CD8-positive, alpha-beta T cell (primary cell): ENCODE measurements at regions of chr9 and their contacts with region 1.

Region 1: DNA sequence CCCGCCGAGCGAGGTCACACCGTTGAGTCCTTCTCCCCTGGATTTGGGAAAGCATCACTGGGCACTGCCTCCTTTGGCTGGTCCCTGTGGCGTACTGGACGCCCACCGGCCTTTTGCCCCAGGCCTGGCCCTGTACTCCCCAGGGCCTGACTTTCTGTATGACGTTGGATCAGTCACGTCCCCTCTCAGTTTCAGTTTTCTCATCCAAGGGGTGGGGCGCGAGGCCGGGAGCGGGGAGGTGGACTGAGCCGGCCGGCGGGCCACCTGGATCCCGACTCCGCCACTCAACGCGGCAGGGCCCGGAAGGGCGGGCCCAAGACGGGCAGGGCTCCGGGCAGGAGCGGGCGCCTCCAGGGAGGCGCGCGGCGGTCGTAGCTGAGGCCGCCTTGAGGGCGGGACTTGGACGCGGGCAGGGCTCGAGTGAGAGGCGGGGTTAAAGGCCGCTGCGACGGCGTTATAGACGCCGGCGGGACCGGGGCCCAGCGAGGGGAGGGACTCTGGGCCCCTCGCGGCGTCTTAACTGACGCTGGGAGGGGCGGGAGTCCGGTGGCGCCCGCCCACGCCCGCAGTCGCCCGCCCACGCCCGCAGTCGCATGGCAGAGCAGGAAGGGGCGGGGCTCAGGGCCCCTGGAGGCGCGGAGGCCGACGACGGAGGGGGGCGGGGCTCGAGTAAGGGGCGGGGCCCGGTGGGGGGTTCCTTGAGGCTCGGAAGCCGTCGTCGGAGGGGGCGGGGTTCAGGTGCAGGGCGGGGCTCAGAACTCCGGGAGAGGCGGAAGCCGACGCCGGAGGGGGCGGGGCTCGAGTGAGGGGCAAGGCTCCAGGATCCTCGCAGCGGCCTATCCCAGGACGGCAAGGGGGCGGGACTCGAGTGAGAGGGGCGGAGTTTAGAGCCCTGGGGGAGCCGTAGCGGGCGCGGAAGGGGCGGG is 549 bp upstream of the CARD19 start:
- DNase-seq: peak; percentile 100
- ATAC-seq: peak; percentile 83
- H3K4me3 ChIP-seq: peak overlapping the region; percentile 70 to 89
- H3K4me3 Mint-ChIP-seq: peak overlapping the region; percentile 85
- H3K27ac ChIP-seq: peak overlapping the region; percentile 90 to 98
- H3K27ac Mint-ChIP-seq: peak overlapping the region; percentile 97
- H3K4me1 ChIP-seq: peaks cover 65% of the 10 kb centered on the region
- H3K4me1 Mint-ChIP-seq: peaks cover 71% of the 10 kb centered on the region
- H3K27me3 ChIP-seq: no peaks in the 10 kb centered on the region
- H3K27me3 Mint-ChIP-seq: no peaks in the 10 kb centered on the region
- CTCF ChIP-seq: no peak

Region 2: DNA sequence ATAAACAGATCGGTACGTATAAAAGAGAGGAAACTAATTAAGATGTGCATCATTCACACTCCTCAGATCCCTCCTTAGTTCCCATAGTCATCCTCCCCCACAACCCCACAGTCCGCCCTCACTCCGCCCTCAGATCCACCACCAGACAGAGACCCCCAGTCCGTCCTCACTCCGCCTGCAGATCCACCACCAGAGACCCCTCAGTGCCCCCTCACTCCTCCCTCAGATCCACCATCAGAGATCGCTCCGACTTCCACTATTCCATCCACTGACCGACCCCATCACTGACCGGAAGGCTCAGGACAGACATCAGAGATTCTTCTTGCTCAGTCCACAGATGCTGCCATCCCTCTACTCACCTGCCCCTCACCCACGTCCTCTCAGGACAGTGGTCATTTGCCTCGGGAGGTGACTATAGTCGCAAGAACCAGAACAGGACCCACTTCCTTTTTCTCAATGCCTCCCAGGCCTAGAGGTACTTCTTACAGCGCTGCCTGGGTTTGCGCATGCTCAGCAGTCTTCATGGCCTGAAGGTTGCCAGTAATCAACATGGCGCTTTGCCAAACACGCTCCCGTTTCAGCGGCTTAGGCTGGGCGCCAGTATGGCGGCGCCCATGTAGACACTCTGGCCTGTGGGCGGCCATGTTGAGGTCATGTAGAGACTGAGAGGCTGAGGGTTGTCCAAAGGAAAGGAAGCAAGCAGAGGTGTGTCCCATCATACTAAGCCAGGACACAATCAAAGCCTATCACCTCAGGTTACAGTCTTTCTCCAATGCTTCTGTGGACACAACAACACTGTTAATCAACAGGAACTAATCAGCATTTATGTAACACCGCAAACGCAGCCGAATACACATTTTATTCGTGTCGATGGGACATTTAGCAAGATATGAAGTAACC is 217.7 kb before region 1 on chr9 and contains the start of gene ZNF484:
- CTCF ChIA-PET with region 1: no interaction called
- POLR2A ChIA-PET with region 1: no interaction called
- intact Hi-C with region 1: loop called (anchors 1 to 5 kb)
- DNase-seq: peak; percentile 91 to 100 (median 98)
- ATAC-seq: peak; percentile 96
- H3K4me3 ChIP-seq: peak within 1 kb of the TSS; percentile 76 to 85
- H3K4me3 Mint-ChIP-seq: peak within 1 kb of the TSS; percentile 100
- H3K27ac ChIP-seq: peak within 1 kb of the TSS; percentile 81 to 90
- H3K27ac Mint-ChIP-seq: peak within 1 kb of the TSS; percentile 100
- H3K4me1 ChIP-seq: peaks cover 19% of the 10 kb centered on the region
- H3K4me1 Mint-ChIP-seq: peaks cover 48% of the 10 kb centered on the region
- H3K27me3 ChIP-seq: no peaks in the 10 kb centered on the region
- H3K27me3 Mint-ChIP-seq: no peaks in the 10 kb centered on the region
- CTCF ChIP-seq: no peak
- total RNA-seq, gene ZNF484: 18.4 to 18.7 TPM

Region 3: GRCh38 chr9:93058355-93059096 is 36.9 kb before region 1 on chr9 and contains the start of gene SUSD3:
- CTCF ChIA-PET with region 1: no interaction called
- POLR2A ChIA-PET with region 1: interaction called, 19 read pairs
- intact Hi-C with region 1: loop called in 1 of 2 experiments (anchors 1 kb)
- DNase-seq: peak in 8 of 9 experiments; percentile 52 to 84 (median 69)
- ATAC-seq: peak; percentile 63
- H3K4me3 ChIP-seq: peak within 1 kb of the TSS; percentile 60 to 91
- H3K4me3 Mint-ChIP-seq: peak within 1 kb of the TSS; percentile 91
- H3K27ac ChIP-seq: peak within 1 kb of the TSS; percentile 63 to 83
- H3K27ac Mint-ChIP-seq: peak within 1 kb of the TSS; percentile 100
- H3K4me1 ChIP-seq: peaks cover 81% of the 10 kb centered on the region
- H3K4me1 Mint-ChIP-seq: peaks cover 80% of the 10 kb centered on the region
- H3K27me3 ChIP-seq: no peaks in the 10 kb centered on the region
- H3K27me3 Mint-ChIP-seq: no peaks in the 10 kb centered on the region
- CTCF ChIP-seq: no peak
- total RNA-seq, gene SUSD3: 20.6 to 22.7 TPM

Region 4: GRCh38 chr9:93134015-93134739 is 38.7 kb after region 1 on chr9 and contains the start of gene NINJ1:
- CTCF ChIA-PET with region 1: no interaction called
- POLR2A ChIA-PET with region 1: interaction called, 5 read pairs
- intact Hi-C with region 1: loop called (anchors 1 kb)
- DNase-seq: peak; percentile 59 to 97 (median 79)
- ATAC-seq: peak; percentile 83
- H3K4me3 ChIP-seq: peak within 1 kb of the TSS; percentile 84 to 89
- H3K4me3 Mint-ChIP-seq: peak within 1 kb of the TSS; percentile 92
- H3K27ac ChIP-seq: peak within 1 kb of the TSS; percentile 85 to 92
- H3K27ac Mint-ChIP-seq: peak within 1 kb of the TSS; percentile 96
- H3K4me1 ChIP-seq: peaks cover 50% of the 10 kb centered on the region
- H3K4me1 Mint-ChIP-seq: peaks cover 56% of the 10 kb centered on the region
- H3K27me3 ChIP-seq: no peaks in the 10 kb centered on the region
- H3K27me3 Mint-ChIP-seq: no peaks in the 10 kb centered on the region
- CTCF ChIP-seq: no peak
- total RNA-seq, gene NINJ1: 214 to 229 TPM

Region 5: DNA sequence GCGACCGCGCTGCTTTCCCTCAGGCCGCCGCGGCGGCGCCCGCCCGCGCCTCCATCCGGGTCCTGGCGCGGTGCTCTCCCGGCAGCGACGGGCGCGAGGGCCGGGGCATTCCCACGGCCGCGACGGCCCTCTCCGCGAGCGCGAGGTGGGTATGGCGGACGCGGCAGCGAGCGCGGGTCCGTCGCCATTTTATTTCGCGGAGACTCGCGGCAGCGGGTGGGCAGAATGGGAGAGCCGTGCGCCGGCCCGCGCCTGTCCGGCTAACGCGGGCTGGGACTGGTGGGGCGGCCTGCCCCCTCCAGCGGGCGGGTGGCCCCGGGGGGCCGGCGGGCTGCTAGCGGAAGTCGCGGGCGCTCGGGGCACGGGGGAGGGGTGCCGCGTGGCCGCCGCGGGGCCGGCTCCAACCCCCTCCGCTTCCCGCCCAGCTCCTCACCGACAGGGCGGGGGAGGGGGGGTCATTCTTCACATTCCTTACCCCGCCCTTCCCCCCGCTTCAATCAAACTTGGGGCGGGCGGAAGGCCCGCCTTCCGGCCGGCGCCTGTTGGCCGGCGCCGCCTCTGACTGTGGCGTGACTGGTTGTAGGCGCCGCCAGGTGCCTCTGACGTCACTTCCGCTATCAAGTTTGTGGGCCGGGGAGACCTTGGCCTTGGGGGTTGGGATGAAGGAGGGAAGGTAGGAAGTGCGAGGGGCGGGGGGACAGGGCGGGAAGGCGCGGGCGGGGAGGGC is 1070.9 kb after region 1 on chr9:
- CTCF ChIA-PET with region 1: no interaction called
- POLR2A ChIA-PET with region 1: no interaction called
- intact Hi-C with region 1: loop called (anchors 5 to 10 kb)
- DNase-seq: peak; percentile 88 to 98 (median 93)
- ATAC-seq: peak; percentile 60
- H3K4me3 ChIP-seq: peak overlapping the region; percentile 52 to 89
- H3K4me3 Mint-ChIP-seq: peak overlapping the region; percentile 90
- H3K27ac ChIP-seq: peak overlapping the region; percentile 89 to 92
- H3K27ac Mint-ChIP-seq: peak overlapping the region; percentile 93
- H3K4me1 ChIP-seq: peaks cover 51% of the 10 kb centered on the region
- H3K4me1 Mint-ChIP-seq: peaks cover 55% of the 10 kb centered on the region
- H3K27me3 ChIP-seq: no peaks in the 10 kb centered on the region
- H3K27me3 Mint-ChIP-seq: no peaks in the 10 kb centered on the region
- CTCF ChIP-seq: no peak

Region 6: GRCh38 chr9:94250456-94250855 is 1155.0 kb after region 1 on chr9:
- CTCF ChIA-PET with region 1: no interaction called
- POLR2A ChIA-PET with region 1: no interaction called
- intact Hi-C with region 1: no loop called
- DNase-seq: peak in 7 of 9 experiments; percentile 9 to 58 (median 24)
- ATAC-seq: peak; percentile 68
- H3K4me3 ChIP-seq: no peak overlapping the region
- H3K4me3 Mint-ChIP-seq: no peak overlapping the region
- H3K27ac ChIP-seq: peak overlapping the region in 1 of 2 experiments; percentile 19
- H3K27ac Mint-ChIP-seq: peak overlapping the region; percentile 63
- H3K4me1 ChIP-seq: peaks cover 13% of the 10 kb centered on the region
- H3K4me1 Mint-ChIP-seq: peaks cover 16% of the 10 kb centered on the region
- H3K27me3 ChIP-seq: no peaks in the 10 kb centered on the region
- H3K27me3 Mint-ChIP-seq: peaks cover 2% of the 10 kb centered on the region
- CTCF ChIP-seq: no peak